Activated CD4-positive, alpha-beta T cell treated with anti-CD3 and anti-CD28 coated beads, Interleukin-2, amount 10 ng/mL, durations not matched to agents 24 days and 14 days (primary cell): ENCODE measurements at regions of chr1 and their contacts with region 1.

Region 1: DNA sequence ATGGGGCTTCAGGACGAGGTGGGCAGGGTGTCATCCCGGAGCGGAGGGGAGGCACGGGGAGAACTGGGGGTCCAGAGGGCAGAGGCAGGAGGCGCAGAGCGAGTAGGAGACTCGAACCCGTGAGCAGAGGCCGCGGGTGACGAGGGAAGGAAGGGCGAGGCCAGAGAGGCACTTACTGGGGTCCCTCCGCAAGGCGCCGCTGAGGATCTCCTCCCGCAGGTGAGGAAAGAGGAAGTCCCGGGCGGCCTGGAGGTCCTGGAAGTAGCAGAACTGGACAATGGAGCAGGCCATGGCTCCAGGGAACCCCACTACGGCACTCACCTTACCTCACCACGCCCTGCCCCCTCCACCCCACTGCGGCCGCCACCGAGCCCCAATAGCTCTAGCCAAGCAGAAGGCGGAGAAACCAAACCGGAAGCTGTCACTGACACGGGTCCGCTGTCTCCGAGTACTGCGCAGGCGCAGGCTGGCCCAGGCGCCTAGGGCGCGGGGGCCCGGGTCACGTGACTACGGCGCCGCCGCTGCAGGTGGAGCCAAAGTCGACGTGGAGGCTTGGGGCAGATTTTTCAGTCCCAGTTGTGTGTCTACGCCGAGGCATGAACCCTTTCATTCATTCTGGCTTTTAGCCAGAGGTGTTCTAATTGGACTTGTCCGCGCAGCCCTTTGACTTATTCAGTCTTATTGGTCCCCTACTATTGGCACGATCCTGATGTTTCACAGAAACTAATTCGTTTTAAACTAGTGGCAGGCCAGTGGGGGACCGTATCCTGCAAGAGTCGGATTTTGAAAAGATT is at the start of gene RAB3GAP2:
- DNase-seq: peak; percentile 96
- H3K4me3 Mint-ChIP-seq: no peak within 1 kb of the TSS
- H3K27ac Mint-ChIP-seq: no peak within 1 kb of the TSS
- H3K4me1 Mint-ChIP-seq: peaks cover 17% of the 10 kb centered on the region
- H3K27me3 Mint-ChIP-seq: peaks cover 12% of the 10 kb centered on the region
- total RNA-seq, gene RAB3GAP2: 55.0 and 60.0 TPM in 2 replicates

Region 2: DNA sequence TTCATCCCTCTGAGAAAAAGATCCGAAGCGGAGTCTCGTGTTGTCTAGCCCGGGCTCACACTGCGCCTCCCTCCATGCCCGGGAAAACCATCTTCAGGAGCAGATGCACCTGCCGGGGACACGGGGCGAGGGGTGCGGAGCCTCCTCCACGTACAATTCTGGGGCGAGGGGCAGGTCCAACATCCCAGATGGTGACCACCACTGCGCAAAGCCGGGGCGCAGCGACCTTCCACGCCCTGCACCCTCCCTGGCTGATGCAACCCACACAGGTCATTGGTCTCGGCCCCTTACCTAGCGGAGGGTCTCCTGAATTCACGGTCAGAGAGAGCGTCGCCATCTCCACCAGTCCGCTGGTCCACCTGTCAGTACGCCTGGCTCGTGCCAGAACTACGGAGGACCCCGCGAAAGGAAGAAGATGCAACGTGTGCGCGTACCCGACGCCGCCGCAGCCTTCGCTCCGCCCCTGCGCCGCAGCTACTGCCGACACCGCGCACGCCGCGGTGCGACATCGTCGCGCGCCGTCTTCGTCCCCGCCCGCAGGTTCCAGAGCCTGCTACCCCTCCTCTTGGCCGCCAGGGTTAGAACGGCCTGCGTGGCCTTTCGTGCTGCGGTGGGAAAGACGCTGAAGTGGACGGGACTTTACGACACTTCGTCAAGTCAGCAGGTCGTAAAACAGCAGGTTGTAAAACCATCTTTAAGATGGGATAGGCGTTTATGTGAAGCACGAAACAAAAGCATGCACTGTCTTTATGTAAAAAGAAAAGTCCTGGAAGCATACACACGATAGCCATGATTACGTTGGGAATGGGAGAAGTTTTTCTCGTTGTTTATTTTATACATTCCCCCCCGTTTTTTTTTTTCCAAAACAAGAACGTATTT is 226.0 kb before region 1 on chr1 and contains the start of gene EPRS1:
- intact Hi-C with region 1: loop called (anchors 5 kb)
- DNase-seq: peak; percentile 98
- H3K4me3 Mint-ChIP-seq: peak within 1 kb of the TSS; percentile 91
- H3K27ac Mint-ChIP-seq: peak within 1 kb of the TSS; percentile 92
- H3K4me1 Mint-ChIP-seq: peaks cover 37% of the 10 kb centered on the region
- H3K27me3 Mint-ChIP-seq: no peaks in the 10 kb centered on the region
- total RNA-seq, gene EPRS1: 182 and 200 TPM in 2 replicates

Region 3: GRCh38 chr1:220217383-220217988 is 54.8 kb before region 1 on chr1:
- intact Hi-C with region 1: loop called (anchors 1 kb)
- DNase-seq: no peak
- H3K4me3 Mint-ChIP-seq: no peak overlapping the region
- H3K27ac Mint-ChIP-seq: no peak overlapping the region
- H3K4me1 Mint-ChIP-seq: peaks cover 6% of the 10 kb centered on the region
- H3K27me3 Mint-ChIP-seq: no peaks in the 10 kb centered on the region

Region 4: GRCh38 chr1:220255204-220255603 is 17.0 kb before region 1 on chr1:
- intact Hi-C with region 1: loop called (anchors 2 kb)
- DNase-seq: no peak
- H3K4me3 Mint-ChIP-seq: no peak overlapping the region
- H3K27ac Mint-ChIP-seq: no peak overlapping the region
- H3K4me1 Mint-ChIP-seq: peaks cover 32% of the 10 kb centered on the region
- H3K27me3 Mint-ChIP-seq: no peaks in the 10 kb centered on the region

Region 5: DNA sequence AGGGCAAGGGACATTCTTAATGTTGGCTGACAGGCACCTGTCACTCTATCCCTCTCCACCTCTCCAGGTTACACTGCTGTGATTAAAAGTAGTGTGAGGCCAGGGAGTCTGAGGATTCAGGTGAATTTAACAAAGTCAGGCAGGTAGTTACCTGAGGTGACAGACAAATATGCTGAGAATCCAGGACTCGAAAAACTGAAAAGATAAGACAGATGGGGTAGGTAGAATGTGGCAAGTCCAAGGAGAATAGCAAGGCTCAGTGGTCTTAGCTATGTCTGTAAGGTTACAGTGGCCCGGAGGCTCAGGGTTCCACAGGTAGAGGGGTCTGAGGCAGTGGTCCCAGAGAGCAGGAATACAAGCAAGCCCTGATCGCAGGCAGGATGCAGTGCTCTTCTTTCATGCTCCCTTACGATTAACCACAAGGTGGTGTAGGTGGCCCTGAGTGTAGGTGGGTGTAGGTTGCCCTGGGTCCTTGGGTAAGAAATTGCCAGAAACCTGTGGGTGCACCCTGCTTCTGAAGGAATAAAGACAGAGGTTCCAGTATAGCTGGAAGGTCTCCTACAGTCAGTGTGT is 99.0 kb after region 1 on chr1:
- intact Hi-C with region 1: no loop called
- DNase-seq: no peak
- H3K4me3 Mint-ChIP-seq: no peak overlapping the region
- H3K27ac Mint-ChIP-seq: no peak overlapping the region
- H3K4me1 Mint-ChIP-seq: no peaks in the 10 kb centered on the region
- H3K27me3 Mint-ChIP-seq: no peaks in the 10 kb centered on the region

Region 6: DNA sequence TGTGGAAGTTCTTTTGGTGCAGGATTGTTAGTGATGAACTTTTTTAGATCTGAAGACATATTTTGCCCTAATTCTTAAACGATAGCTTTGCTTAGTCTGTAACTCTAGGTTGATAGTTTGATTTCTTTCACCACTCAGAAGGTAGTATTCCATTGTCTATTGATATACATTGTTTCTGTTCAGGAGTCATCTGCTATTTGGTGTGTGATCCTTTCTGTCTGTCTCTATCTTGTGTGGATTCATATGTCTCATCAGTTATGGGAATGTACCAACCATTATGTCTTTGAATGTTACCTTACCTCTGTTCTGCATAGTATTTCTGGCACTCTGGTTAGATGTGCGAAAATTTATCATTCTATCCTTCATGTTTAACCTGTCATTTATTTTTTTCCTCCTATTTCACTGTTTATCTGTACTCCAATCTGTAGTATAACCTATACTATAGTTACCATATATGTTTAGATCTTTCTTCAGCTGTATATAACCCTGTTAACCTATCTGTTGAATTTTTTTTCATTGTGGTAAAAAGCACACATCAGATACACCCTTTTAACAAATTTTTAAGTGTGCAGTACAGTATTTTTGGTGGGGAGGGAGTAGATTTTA is 261.4 kb after region 1 on chr1:
- intact Hi-C with region 1: no loop called
- DNase-seq: no peak
- H3K4me3 Mint-ChIP-seq: no peak overlapping the region
- H3K27ac Mint-ChIP-seq: no peak overlapping the region
- H3K4me1 Mint-ChIP-seq: peaks cover 2% of the 10 kb centered on the region
- H3K27me3 Mint-ChIP-seq: peaks cover 32% of the 10 kb centered on the region